Prostate gland (tissue), 2 donors: ENCODE measurements at regions of chr22 and their contacts with region 1.

Region 1: GRCh38 chr22:19178656-19179496 is at the start of gene SLC25A1:
- DNase-seq: peak; percentile 89
- H3K4me3 ChIP-seq: peak within 1 kb of the TSS; percentile 92 to 93
- H3K27ac ChIP-seq: peak within 1 kb of the TSS; percentile 90 to 97
- H3K4me1 ChIP-seq: peaks cover 12% of the 10 kb centered on the region
- H3K27me3 ChIP-seq: no peaks in the 10 kb centered on the region
- CTCF ChIP-seq: no peak
- POLR2A ChIP-seq: peak; percentile 60
- total RNA-seq, gene SLC25A1: 79.1 to 113 TPM

Region 2: GRCh38 chr22:19120829-19121630 is 57.8 kb before region 1 on chr22:
- intact Hi-C with region 1: no loop called
- DNase-seq: peak; percentile 48
- H3K4me3 ChIP-seq: peak overlapping the region; percentile 93 to 94
- H3K27ac ChIP-seq: peak overlapping the region; percentile 94 to 97
- H3K4me1 ChIP-seq: peaks cover 11% of the 10 kb centered on the region
- H3K27me3 ChIP-seq: no peaks in the 10 kb centered on the region
- CTCF ChIP-seq: no peak
- POLR2A ChIP-seq: peak; percentile 50

Region 3: GRCh38 chr22:19291580-19292457 is 112.9 kb after region 1 on chr22 and contains the start of gene CLTCL1:
- intact Hi-C with region 1: loop called (anchors 5 kb)
- DNase-seq: peak; percentile 80
- H3K4me3 ChIP-seq: peak within 1 kb of the TSS; percentile 93 to 96
- H3K27ac ChIP-seq: peak within 1 kb of the TSS; percentile 73 to 78
- H3K4me1 ChIP-seq: no peaks in the 10 kb centered on the region
- H3K27me3 ChIP-seq: no peaks in the 10 kb centered on the region
- CTCF ChIP-seq: no peak
- POLR2A ChIP-seq: peak; percentile 18
- total RNA-seq, gene CLTCL1: 12.1 to 26.2 TPM

Region 4: GRCh38 chr22:19432133-19432851 is 253.4 kb after region 1 on chr22 and contains the start of gene MRPL40:
- intact Hi-C with region 1: loop called (anchors 5 kb)
- DNase-seq: peak; percentile 90
- H3K4me3 ChIP-seq: peak within 1 kb of the TSS; percentile 59 to 77
- H3K27ac ChIP-seq: peak within 1 kb of the TSS; percentile 89 to 95
- H3K4me1 ChIP-seq: peaks cover 20% of the 10 kb centered on the region
- H3K27me3 ChIP-seq: no peaks in the 10 kb centered on the region
- CTCF ChIP-seq: peak in 3 of 4 experiments; percentile 10 to 40 (median 19)
- POLR2A ChIP-seq: peak; percentile 83
- total RNA-seq, gene MRPL40: 28.6 to 54.3 TPM